ENCODE measurements at regions of chr18 and their contacts with region 1.

Region 1: GRCh38 chr18:45974088-45974536 is 7.0 kb upstream of the EPG5 start:
- DNase-seq: peak; percentile 91
- H3K4me3 Mint-ChIP-seq: no peak overlapping the region
- H3K27ac Mint-ChIP-seq: peak overlapping the region; percentile 25
- H3K4me1 Mint-ChIP-seq: peaks cover 6% of the 10 kb centered on the region
- H3K27me3 Mint-ChIP-seq: no peaks in the 10 kb centered on the region

Region 2: DNA sequence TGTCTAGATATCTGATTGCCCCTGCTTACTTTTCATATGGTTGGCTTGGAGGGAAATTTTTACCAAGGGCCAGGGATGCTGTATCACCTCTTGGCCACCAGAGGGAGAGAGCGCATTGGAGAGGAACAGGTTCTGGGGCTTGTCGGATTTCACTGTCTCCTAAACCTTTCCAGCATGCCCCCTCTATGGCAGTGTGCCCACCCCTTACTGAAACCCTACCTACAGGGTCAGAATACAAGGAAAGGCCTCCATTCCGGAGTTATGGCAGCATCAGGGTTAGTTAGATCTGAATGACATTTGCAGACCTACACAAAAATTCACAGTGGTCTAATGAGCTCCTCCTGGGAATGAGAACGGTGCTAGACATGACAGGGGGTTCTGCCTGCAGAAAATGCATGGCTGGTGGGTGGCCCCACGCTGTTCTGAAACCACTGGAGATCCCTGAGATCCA is 353.0 kb before region 1 on chr18:
- intact Hi-C with region 1: loop called (anchors 1 kb)
- DNase-seq: peak; percentile 81
- H3K4me3 Mint-ChIP-seq: no peak overlapping the region
- H3K27ac Mint-ChIP-seq: no peak overlapping the region
- H3K4me1 Mint-ChIP-seq: no peaks in the 10 kb centered on the region
- H3K27me3 Mint-ChIP-seq: peaks cover 19% of the 10 kb centered on the region

Region 3: DNA sequence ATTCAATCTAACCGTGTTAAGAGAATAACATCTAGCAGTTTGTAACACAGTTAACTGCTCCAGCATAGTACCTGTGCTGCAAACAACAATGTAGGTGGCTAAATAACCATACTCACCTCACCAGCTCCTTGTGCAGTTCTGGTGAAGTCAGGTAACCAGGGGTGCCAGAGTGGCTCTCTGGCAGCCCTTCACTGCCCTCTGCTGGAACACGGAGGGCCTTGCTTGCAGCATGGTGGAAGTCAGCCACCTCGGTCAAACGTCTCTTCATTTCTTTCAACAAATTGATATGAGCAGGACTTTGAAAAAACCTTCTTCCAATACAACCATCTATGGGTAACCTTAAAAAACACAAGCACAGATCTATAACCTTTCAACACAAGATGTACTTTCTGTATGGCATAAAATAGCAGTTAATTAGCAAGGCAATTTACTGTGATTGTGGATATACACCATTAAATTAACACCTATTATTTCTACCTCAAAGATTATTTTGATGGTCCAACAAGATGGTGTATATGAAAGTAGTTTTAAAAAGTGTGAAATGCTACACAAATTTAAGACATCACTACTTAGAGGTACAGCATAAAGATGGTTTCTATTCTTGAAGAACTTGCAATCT is 63.6 kb before region 1 on chr18:
- intact Hi-C with region 1: loop called (anchors 5 kb)
- DNase-seq: peak; percentile 89
- H3K4me3 Mint-ChIP-seq: no peak overlapping the region
- H3K27ac Mint-ChIP-seq: no peak overlapping the region
- H3K4me1 Mint-ChIP-seq: no peaks in the 10 kb centered on the region
- H3K27me3 Mint-ChIP-seq: no peaks in the 10 kb centered on the region